Endothelial cell of umbilical vein (primary cell): ENCODE measurements at regions of chr5 and their contacts with region 1.

Region 1: GRCh38 chr5:140401362-140402257 is at the start of gene ANKHD1:
- DNase-seq: peak; percentile 100
- H3K4me3 ChIP-seq: peak within 1 kb of the TSS; percentile 42 to 92 (median 87)
- H3K27ac ChIP-seq: peak within 1 kb of the TSS; percentile 44
- H3K4me1 ChIP-seq: peaks cover 8% of the 10 kb centered on the region
- H3K27me3 ChIP-seq: no peaks in the 10 kb centered on the region
- CTCF ChIP-seq: no peak
- POLR2A ChIP-seq: peak; percentile 67
- total RNA-seq, gene ANKHD1: 87.0 and 92.4 TPM in 2 replicates

Region 2: DNA sequence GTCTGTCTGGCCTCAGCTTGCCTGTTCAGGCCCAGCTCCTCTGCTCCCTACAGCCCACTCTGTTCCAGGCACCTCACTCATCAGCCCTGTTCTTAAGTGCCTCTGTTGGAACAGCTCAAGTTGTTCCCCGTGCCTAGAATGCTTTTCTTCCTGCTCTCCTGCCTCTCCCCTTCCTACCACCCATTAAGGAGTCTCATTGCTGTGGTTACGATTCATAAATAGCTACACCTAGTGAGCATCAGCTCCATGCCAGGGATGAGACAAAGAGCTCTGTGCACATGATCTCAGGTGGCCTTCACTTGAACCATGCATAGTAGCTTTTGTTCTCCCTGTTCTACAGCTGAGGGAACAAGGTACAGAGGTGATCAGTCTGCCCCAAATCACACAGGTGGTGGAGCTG is 551.7 kb before region 1 on chr5:
- CTCF ChIA-PET with region 1: no interaction called
- POLR2A ChIA-PET with region 1: no interaction called
- dilution Hi-C with region 1: no loop called
- intact Hi-C with region 1: no loop called
- DNase-seq: peak; percentile 21
- H3K4me3 ChIP-seq: no peak overlapping the region
- H3K27ac ChIP-seq: no peak overlapping the region
- H3K4me1 ChIP-seq: no peaks in the 10 kb centered on the region
- H3K27me3 ChIP-seq: peaks cover 4% of the 10 kb centered on the region in 2 experiments
- CTCF ChIP-seq: no peak
- POLR2A ChIP-seq: no peak

Region 3: GRCh38 chr5:140481758-140482157 is 80.1 kb after region 1 on chr5:
- CTCF ChIA-PET with region 1: no interaction called
- POLR2A ChIA-PET with region 1: no interaction called
- dilution Hi-C with region 1: no loop called
- intact Hi-C with region 1: loop called (anchors 5 kb)
- DNase-seq: no peak
- H3K4me3 ChIP-seq: no peak overlapping the region
- H3K27ac ChIP-seq: no peak overlapping the region
- H3K4me1 ChIP-seq: peaks cover 26% of the 10 kb centered on the region
- H3K27me3 ChIP-seq: no peaks in the 10 kb centered on the region
- CTCF ChIP-seq: no peak
- POLR2A ChIP-seq: no peak

Region 4: DNA sequence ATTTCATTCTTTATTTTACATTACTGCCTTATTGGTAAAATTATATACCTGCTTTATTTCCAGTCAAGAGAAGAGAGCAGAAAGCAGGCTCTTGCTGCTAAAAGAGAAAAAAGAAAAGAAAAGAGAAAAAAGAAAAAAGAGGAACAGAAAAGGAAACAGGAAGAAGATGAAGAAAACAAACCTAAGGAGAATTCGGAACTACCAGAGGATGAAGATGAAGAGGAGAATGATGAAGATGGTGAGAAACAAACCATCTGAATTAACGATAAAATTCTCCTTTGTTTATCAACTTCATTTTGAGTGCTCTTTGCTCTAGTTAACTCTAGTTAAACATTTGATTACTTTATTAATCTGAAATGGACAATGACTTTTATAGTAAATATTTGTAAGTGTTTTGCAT is 122.4 kb after region 1 on chr5:
- CTCF ChIA-PET with region 1: no interaction called
- POLR2A ChIA-PET with region 1: no interaction called
- dilution Hi-C with region 1: no loop called
- intact Hi-C with region 1: no loop called
- DNase-seq: no peak
- H3K4me3 ChIP-seq: no peak overlapping the region
- H3K27ac ChIP-seq: no peak overlapping the region
- H3K4me1 ChIP-seq: no peaks in the 10 kb centered on the region
- H3K27me3 ChIP-seq: no peaks in the 10 kb centered on the region
- CTCF ChIP-seq: no peak
- POLR2A ChIP-seq: no peak

Region 5: GRCh38 chr5:140564196-140565023 is 162.8 kb after region 1 on chr5 and contains the starts of genes APBB3 and SLC35A4:
- CTCF ChIA-PET with region 1: no interaction called
- POLR2A ChIA-PET with region 1: no interaction called
- dilution Hi-C with region 1: no loop called
- intact Hi-C with region 1: loop called (anchors 1 kb)
- DNase-seq: peak; percentile 97
- H3K4me3 ChIP-seq: peak within 1 kb of the TSS; percentile 49 to 84 (median 73)
- H3K27ac ChIP-seq: peak within 1 kb of the TSS; percentile 65
- H3K4me1 ChIP-seq: peaks cover 8% of the 10 kb centered on the region
- H3K27me3 ChIP-seq: no peaks in the 10 kb centered on the region
- CTCF ChIP-seq: no peak
- POLR2A ChIP-seq: peak; percentile 83
- total RNA-seq, gene APBB3: 12.1 and 13.3 TPM in 2 replicates
- total RNA-seq, gene SLC35A4: 60.9 and 65.6 TPM in 2 replicates

Region 6: DNA sequence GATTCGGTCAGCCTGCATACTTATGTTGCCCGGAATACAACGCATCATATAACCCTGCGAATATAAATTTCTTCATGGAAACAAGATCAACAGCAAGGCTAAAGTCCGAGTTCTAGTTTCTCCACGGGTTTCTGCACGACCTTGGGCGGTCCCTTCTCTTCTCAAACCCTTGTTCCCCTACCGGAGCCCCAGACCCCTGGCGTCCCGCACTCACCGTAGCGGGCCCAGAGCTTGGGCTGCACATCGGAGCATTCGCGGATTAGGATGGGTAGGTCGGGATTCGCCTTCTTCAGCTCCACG is 245.4 kb after region 1 on chr5:
- CTCF ChIA-PET with region 1: no interaction called
- POLR2A ChIA-PET with region 1: interaction called, 5 read pairs
- dilution Hi-C with region 1: no loop called
- intact Hi-C with region 1: loop called (anchors 1 kb)
- DNase-seq: peak; percentile 10
- H3K4me3 ChIP-seq: peak overlapping the region; percentile 65 to 90 (median 76)
- H3K27ac ChIP-seq: peak overlapping the region; percentile 21
- H3K4me1 ChIP-seq: peaks cover 13% of the 10 kb centered on the region
- H3K27me3 ChIP-seq: no peaks in the 10 kb centered on the region
- CTCF ChIP-seq: no peak
- POLR2A ChIP-seq: no peak

Region 7: GRCh38 chr5:140718241-140718580 is 316.6 kb after region 1 on chr5:
- CTCF ChIA-PET with region 1: interaction called, 3 read pairs
- POLR2A ChIA-PET with region 1: no interaction called
- dilution Hi-C with region 1: no loop called
- intact Hi-C with region 1: loop called (anchors 1 kb)
- DNase-seq: no peak
- H3K4me3 ChIP-seq: no peak overlapping the region
- H3K27ac ChIP-seq: peak overlapping the region; percentile 60
- H3K4me1 ChIP-seq: peaks cover 6% of the 10 kb centered on the region
- H3K27me3 ChIP-seq: peaks cover 0 to 2% of the 10 kb centered on the region in 2 experiments
- CTCF ChIP-seq: no peak
- POLR2A ChIP-seq: no peak